ENCODE measurements at regions of chr5 and their contacts with region 1.

Region 1: DNA sequence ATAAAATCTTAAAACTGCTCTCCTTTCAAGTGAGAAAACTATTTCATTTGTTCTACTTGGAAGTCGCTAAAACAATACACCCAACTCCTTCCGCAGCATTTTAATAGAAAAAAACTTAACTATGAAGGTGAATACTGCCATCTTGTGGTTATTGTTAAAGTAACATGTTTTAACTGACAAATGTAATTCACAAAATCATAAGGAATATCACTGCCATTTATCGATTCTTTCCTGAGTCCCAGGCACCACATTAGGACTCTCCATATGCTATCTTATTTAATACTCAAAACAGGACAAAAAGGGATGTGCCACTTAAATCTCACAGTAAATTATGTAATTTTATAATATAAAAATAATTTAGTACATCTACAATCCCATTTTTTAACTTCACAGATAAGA is 130.5 kb upstream of the ITGA1 start:
- DNase-seq: no peak
- H3K4me3 ChIP-seq: no peak overlapping the region
- H3K27ac ChIP-seq: no peak overlapping the region
- H3K4me1 ChIP-seq: no peaks in the 10 kb centered on the region
- H3K27me3 ChIP-seq: peaks cover 3% of the 10 kb centered on the region
- CTCF ChIP-seq: peak in 1 of 3 experiments; percentile 33

Region 2: GRCh38 chr5:52043543-52043942 is 613.7 kb before region 1 on chr5:
- dilution Hi-C with region 1: loop called (anchors 25 kb)
- DNase-seq: no peak
- H3K4me3 ChIP-seq: no peak overlapping the region
- H3K27ac ChIP-seq: no peak overlapping the region
- H3K4me1 ChIP-seq: no peaks in the 10 kb centered on the region
- H3K27me3 ChIP-seq: no peaks in the 10 kb centered on the region
- CTCF ChIP-seq: no peak

Region 3: DNA sequence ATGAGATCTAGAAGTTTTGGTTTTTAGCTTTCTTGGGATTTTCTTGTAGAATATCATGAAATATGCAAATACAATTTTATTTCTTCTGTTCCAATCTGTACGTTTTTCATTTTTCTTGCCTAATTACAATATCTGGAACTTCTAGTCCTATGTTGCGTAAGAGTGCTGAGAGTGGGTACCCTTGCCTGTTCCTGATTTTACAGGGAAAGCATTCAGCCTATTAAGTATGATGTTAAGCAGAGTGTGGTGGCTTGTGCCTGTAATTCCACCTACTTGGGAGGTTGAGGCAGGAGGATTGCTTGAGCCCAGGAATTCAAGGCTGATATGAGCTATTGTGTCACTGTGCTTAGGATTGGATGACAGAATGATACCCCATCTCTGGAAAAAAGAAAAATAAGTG is 79.7 kb before region 1 on chr5:
- dilution Hi-C with region 1: no loop called
- DNase-seq: no peak
- H3K4me3 ChIP-seq: no peak overlapping the region
- H3K27ac ChIP-seq: no peak overlapping the region
- H3K4me1 ChIP-seq: no peaks in the 10 kb centered on the region
- H3K27me3 ChIP-seq: no peaks in the 10 kb centered on the region
- CTCF ChIP-seq: no peak